ENCODE measurements at regions of chr1 and their contacts with region 1.

Region 1: DNA sequence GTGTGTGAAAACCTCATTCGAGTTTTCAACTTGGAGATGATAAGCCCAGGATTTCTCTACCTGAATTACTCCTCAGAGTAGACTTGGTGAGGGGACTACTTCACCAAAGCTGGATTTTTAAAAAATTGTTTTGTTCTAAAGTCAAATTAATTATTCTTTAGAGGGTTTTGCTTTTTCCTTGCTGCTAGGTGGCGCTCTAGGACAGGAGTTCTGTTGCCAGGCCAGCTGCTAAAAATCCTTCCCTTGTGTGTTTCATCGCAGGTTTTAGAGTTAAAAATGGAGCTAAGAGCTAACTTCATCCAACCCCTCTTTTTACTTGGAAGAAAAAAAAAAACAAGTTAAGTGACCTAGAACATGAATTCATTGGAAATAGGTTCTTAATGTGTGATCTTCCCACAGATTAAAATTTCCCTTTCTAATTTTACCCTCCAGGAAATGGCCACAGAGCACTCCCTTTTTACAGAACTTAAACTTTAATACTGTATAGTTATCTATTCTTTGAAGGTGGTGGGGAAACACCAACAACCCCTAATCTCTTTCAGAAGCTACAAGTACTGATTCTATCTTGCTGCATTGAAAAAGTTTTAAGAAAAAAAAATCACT is 36.7 kb upstream of the FAM163A start:
- DNase-seq: peak; percentile 89
- H3K4me3 Mint-ChIP-seq: no peak overlapping the region
- H3K27ac Mint-ChIP-seq: peak overlapping the region; percentile 11
- H3K4me1 Mint-ChIP-seq: peaks cover 20% of the 10 kb centered on the region
- H3K27me3 Mint-ChIP-seq: peaks cover 8% of the 10 kb centered on the region

Region 2: GRCh38 chr1:179728271-179728670 is 21.8 kb after region 1 on chr1:
- intact Hi-C with region 1: no loop called
- DNase-seq: no peak
- H3K4me3 Mint-ChIP-seq: no peak overlapping the region
- H3K27ac Mint-ChIP-seq: no peak overlapping the region
- H3K4me1 Mint-ChIP-seq: no peaks in the 10 kb centered on the region
- H3K27me3 Mint-ChIP-seq: peaks cover 20% of the 10 kb centered on the region

Region 3: DNA sequence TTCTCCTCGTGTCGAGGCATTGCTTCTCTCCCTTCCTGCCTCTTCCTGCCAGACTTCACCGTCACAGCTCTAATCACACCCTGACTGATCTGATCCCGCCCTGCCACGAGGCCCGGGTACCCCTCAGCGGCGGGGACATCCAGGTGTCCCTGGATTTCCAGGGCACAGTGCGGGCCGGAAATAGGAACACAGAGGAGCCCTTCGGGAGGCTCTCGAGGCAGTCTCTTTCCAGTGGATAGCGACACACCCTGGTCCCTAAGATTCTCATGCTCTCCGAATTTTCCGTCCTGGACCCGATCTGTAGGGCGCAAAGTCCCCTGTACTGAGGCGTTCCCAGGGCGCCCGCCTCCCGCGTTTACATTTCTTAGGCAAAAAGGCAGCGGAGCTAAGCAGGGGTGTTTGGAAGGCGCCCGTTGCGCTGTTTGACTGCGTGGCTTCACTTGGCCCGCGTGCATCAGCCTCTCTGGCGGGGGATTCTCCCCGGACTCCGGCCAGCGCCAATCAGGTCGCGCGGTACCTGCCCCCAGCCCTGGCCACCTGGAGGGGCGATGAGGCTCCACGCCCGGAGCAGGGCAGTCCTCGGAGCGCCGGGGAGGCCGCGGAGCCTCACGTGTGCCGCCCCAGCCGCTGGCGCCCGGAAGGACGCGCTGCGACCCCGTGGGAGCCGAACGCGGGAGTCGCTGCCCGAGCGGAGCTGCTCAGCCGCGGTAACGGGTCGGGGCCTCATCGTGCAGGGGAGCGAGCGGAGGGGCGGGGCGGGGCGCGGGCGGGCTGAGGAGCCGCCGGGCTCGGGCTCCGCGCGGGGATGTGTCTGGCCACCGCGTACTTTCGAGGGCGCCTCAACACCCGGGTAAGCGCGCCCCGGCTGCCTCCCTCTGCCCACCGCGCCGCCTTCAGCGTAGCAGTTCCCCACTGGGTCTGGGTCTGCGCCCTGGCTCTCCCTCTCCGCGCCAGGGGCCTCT is 36.6 kb after region 1 on chr1 and contains the start of gene FAM163A:
- intact Hi-C with region 1: loop called (anchors 1 kb)
- DNase-seq: no peak
- H3K4me3 Mint-ChIP-seq: peak within 1 kb of the TSS; percentile 69
- H3K27ac Mint-ChIP-seq: no peak within 1 kb of the TSS
- H3K4me1 Mint-ChIP-seq: peaks cover 9% of the 10 kb centered on the region
- H3K27me3 Mint-ChIP-seq: peaks cover 71% of the 10 kb centered on the region
- total RNA-seq, gene FAM163A: not detected in 2 replicates

Region 4: GRCh38 chr1:179809506-179810366 is 103.3 kb after region 1 on chr1:
- intact Hi-C with region 1: loop called (anchors 1 kb)
- DNase-seq: peak; percentile 88
- H3K4me3 Mint-ChIP-seq: no peak overlapping the region
- H3K27ac Mint-ChIP-seq: no peak overlapping the region
- H3K4me1 Mint-ChIP-seq: peaks cover 8% of the 10 kb centered on the region
- H3K27me3 Mint-ChIP-seq: peaks cover 1% of the 10 kb centered on the region

Region 5: DNA sequence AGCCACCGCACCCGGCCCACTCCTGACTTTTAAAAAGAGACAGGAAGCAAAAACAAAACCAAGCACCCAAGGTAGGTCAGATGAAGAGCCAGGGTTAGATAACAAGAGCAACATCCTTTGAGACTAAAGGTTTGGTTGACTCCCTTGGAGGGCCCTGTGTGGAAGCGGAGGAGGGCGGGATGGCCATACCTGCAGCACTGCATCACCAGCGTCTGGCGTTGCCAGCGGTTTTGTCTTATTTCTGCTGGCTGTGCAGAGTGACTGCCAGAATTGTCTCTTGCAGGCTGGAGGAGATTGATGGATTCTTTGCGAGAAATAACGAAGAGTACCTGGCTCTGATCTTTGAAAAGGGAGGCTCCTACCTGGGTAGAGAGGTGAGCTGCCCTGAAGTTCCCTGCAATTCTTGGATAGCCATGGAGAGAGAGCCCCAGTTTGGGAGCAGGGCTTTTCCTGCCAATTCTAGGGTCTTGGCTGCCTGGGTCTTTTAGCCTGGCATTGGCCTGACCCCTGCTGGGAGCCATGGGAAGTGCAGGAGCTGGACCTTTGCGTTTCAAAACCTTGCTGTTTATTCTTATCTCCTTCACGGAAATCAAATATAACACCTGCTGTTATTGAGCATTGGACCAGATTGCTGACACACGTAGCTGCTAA is 472.2 kb after region 1 on chr1:
- intact Hi-C with region 1: loop called (anchors 1 kb)
- DNase-seq: peak; percentile 91
- H3K4me3 Mint-ChIP-seq: no peak overlapping the region
- H3K27ac Mint-ChIP-seq: no peak overlapping the region
- H3K4me1 Mint-ChIP-seq: no peaks in the 10 kb centered on the region
- H3K27me3 Mint-ChIP-seq: no peaks in the 10 kb centered on the region